A673 (cell line): ENCODE measurements at regions of chr13 and their contacts with region 1.

Region 1: DNA sequence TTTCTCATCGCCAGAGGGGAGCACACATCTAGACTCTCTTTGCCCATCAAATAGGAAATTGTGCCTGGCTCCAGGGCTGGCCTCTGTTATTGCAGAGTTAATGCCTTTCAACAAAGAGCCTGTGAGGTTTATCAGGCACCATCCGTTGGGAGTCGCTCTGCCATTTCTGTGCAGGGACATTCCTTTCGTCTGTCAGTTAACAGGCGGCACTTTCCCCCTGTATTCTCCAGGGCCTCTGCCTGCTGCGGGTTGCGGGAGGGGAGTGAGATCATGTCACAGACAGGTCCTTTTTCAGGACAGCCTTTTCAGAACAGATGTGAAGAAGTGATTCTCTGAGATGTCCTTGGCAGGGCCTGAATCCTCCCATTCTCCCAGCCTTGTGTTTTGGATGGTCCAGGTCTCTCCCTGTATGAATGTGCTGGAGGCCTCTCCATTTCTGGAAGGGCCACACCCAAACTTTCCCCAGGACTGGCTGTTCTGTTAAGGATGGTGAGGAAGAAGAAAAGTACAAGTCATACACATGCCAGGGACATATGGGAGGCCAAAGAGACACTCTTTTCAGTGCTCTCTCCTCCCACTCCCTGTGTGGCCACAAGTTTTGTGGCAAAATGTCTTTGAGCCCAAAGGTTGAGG is 14.9 kb downstream of the SERP2 start:
- DNase-seq: no peak
- H3K4me3 ChIP-seq: no peak overlapping the region
- H3K27ac ChIP-seq: no peak overlapping the region
- H3K4me1 ChIP-seq: no peaks in the 10 kb centered on the region
- H3K27me3 ChIP-seq: no peaks in the 10 kb centered on the region
- CTCF ChIP-seq: no peak

Region 2: DNA sequence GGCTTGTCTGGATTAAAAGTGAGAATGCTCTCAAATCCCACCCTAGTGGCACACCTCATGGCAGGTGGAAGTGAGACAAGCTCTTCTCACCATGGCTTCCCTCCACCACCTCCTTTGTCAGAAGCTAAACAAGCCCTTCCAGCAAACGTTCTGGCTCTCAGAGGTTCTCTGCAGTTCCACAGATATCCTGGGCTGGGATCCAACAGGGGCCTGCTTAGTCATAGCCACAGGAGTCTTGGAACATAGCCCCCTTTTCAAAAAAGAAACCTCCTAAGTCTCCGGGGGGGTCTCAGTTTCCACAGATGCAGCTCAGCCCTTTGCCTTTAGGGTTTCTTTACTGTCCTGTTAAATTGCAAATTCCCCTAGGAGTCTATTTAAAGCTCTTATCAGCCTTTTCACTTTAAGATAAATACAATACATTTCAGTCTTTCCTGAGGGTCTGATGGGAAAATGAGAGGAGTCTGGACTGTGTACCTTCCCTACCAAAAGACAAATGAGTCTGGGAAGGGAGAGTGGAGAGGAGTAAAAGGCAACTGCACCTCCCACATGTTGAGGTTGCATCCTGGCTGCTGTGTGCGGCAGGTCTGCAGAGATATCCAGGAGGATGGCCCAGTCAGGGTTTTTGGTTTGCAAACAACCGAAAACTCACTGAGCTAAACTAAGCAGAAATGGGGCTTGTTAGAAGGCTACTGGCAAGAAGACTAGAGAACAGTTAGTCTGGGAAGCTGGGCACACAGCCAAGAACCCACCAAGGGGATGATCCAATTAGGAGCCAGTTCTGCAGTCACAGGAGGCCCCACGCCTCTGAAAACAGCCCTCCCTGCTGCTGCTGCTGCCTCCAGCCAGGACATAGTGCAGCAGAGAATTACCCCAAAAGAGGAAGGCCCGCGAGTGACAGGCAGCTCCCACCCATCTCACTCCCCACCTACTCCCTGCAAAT is 56.4 kb before region 1 on chr13:
- CTCF ChIA-PET with region 1: no interaction called
- POLR2A ChIA-PET with region 1: no interaction called
- intact Hi-C with region 1: loop called (anchors 5 kb)
- DNase-seq: peak; percentile 95
- H3K4me3 ChIP-seq: peak overlapping the region; percentile 15
- H3K27ac ChIP-seq: peak overlapping the region; percentile 84
- H3K4me1 ChIP-seq: peaks cover 30% of the 10 kb centered on the region
- H3K27me3 ChIP-seq: no peaks in the 10 kb centered on the region
- CTCF ChIP-seq: no peak